Endothelial cell of umbilical vein (primary cell): ENCODE measurements at regions of chr1 and their contacts with region 1.

Region 1: DNA sequence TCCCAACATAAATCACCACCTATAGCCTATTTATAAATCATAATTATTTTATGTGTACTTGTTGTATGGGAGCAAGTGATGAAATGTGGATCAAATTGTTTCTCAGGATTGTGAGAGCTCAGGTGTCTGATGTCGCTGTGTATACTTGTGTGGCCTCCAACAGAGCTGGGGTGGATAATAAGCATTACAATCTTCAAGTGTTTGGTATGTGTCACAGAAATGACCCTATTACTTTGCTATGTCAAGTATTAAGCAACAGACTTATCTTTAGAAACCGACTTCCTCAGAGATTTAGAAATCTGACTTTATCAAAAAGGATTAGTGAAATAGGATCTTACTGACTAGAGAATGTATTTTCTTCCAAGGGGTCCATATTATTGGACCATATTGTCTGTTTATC is 280.9 kb downstream of the TPR start:
- DNase-seq: peak; percentile 73
- H3K4me3 ChIP-seq: no peak overlapping the region
- H3K27ac ChIP-seq: peak overlapping the region; percentile 79
- H3K4me1 ChIP-seq: peaks cover 21% of the 10 kb centered on the region
- H3K27me3 ChIP-seq: no peaks in the 10 kb centered on the region
- CTCF ChIP-seq: no peak
- POLR2A ChIP-seq: no peak

Region 2: GRCh38 chr1:185733818-185734771 is 360.1 kb before region 1 on chr1 and contains the start of gene HMCN1:
- CTCF ChIA-PET with region 1: no interaction called
- POLR2A ChIA-PET with region 1: no interaction called
- dilution Hi-C with region 1: no loop called
- intact Hi-C with region 1: loop called (anchors 5 kb)
- DNase-seq: peak; percentile 85
- H3K4me3 ChIP-seq: peak within 1 kb of the TSS; percentile 52 to 80 (median 74)
- H3K27ac ChIP-seq: peak within 1 kb of the TSS; percentile 50
- H3K4me1 ChIP-seq: peaks cover 19% of the 10 kb centered on the region
- H3K27me3 ChIP-seq: no peaks in the 10 kb centered on the region
- CTCF ChIP-seq: peak; percentile 42 to 51
- POLR2A ChIP-seq: no peak
- total RNA-seq, gene HMCN1: 5.6 and 10.3 TPM in 2 replicates

Region 3: DNA sequence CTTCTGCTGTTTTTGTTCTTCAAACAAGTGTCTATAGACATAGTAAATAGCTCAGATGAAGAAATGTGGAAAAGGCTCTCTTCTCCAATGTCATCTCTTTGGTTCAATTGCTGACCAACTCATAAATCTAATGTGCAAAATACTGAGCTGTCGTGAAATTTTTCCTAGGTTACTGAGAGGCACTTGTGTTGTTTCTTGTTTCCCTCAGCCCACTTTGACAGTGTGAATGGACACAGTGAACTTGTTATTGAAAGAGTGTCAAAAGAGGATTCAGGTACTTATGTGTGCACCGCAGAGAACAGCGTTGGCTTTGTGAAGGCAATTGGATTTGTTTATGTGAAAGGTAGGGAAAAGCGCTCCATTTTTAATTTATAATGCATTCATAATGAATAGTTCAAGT is 35.6 kb after region 1 on chr1:
- CTCF ChIA-PET with region 1: no interaction called
- POLR2A ChIA-PET with region 1: no interaction called
- dilution Hi-C with region 1: no loop called
- intact Hi-C with region 1: no loop called
- DNase-seq: no peak
- H3K4me3 ChIP-seq: no peak overlapping the region
- H3K27ac ChIP-seq: no peak overlapping the region
- H3K4me1 ChIP-seq: no peaks in the 10 kb centered on the region
- H3K27me3 ChIP-seq: no peaks in the 10 kb centered on the region
- CTCF ChIP-seq: no peak
- POLR2A ChIP-seq: no peak